ENCODE measurements at regions of chr6 and their contacts with region 1.

Region 1: DNA sequence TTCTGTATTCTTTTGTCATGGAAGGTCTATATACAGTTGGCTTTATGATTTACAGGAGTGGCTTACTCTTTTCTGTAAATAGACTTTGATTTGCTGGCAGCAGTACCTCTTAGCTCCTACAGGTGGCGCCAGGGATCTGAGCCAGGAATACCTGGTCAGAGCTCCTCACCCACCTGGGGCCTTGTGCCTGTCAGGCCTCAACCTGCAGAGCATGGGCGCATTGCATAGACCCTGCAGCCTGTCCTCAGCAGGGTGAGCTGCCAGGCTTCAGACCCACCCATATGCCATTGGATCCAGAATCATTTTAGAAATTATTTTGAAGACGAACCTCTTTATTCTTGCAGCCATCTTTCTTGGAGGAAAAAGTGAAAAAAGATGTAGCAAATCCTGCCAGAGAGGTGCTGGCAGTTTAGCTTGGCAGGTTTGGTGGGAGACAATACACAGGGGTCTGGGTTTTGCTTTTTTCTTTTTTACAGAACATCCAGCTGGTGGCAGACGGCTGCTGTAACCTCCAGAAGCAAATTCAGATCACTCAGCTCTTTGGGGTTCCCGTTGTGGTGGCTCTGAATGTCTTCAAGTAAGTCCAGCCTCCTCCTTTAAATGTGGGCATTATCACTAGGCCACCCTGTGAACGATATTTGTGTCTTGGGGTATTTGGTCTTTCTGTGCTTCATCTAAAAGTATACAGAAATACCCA is 149.1 kb downstream of the MTHFD1L start:
- DNase-seq: peak; percentile 57 to 74 (median 63)
- H3K4me3 ChIP-seq: no peak overlapping the region
- H3K27ac ChIP-seq: no peak overlapping the region
- H3K4me1 ChIP-seq: no peaks in the 10 kb centered on the region
- H3K27me3 ChIP-seq: no peaks in the 10 kb centered on the region

Region 2: GRCh38 chr6:151004415-151005024 is 10.0 kb before region 1 on chr6:
- CTCF ChIA-PET with region 1: interaction called, 19 read pairs
- POLR2A ChIA-PET with region 1: no interaction called
- DNase-seq: peak; percentile 57 to 84 (median 71)
- H3K4me3 ChIP-seq: peak overlapping the region in 2 of 7 experiments; percentile 42 to 43
- H3K27ac ChIP-seq: peak overlapping the region in 1 of 2 experiments; percentile 19
- H3K4me1 ChIP-seq: peaks cover 6 to 22% (median 15%) of the 10 kb centered on the region in 4 experiments
- H3K27me3 ChIP-seq: no peaks in the 10 kb centered on the region

Region 3: GRCh38 chr6:151038616-151039015 is 24.1 kb after region 1 on chr6:
- CTCF ChIA-PET with region 1: interaction called, 12 read pairs
- POLR2A ChIA-PET with region 1: no interaction called
- DNase-seq: no peak
- H3K4me3 ChIP-seq: no peak overlapping the region
- H3K27ac ChIP-seq: no peak overlapping the region
- H3K4me1 ChIP-seq: peaks cover 0 to 19% (median 11%) of the 10 kb centered on the region in 4 experiments
- H3K27me3 ChIP-seq: no peaks in the 10 kb centered on the region

Region 4: GRCh38 chr6:151063352-151063751 is 48.8 kb after region 1 on chr6:
- CTCF ChIA-PET with region 1: no interaction called
- POLR2A ChIA-PET with region 1: no interaction called
- DNase-seq: no peak
- H3K4me3 ChIP-seq: no peak overlapping the region
- H3K27ac ChIP-seq: no peak overlapping the region
- H3K4me1 ChIP-seq: peaks cover 0 to 11% (median 9%) of the 10 kb centered on the region in 4 experiments
- H3K27me3 ChIP-seq: no peaks in the 10 kb centered on the region

Region 5: GRCh38 chr6:151317103-151317994 is 302.8 kb after region 1 on chr6:
- CTCF ChIA-PET with region 1: interaction called, 109 read pairs
- POLR2A ChIA-PET with region 1: no interaction called
- DNase-seq: no peak
- H3K4me3 ChIP-seq: no peak overlapping the region
- H3K27ac ChIP-seq: no peak overlapping the region
- H3K4me1 ChIP-seq: no peaks in the 10 kb centered on the region
- H3K27me3 ChIP-seq: peaks cover 0 to 3% (median 0%) of the 10 kb centered on the region in 5 experiments

Region 6: DNA sequence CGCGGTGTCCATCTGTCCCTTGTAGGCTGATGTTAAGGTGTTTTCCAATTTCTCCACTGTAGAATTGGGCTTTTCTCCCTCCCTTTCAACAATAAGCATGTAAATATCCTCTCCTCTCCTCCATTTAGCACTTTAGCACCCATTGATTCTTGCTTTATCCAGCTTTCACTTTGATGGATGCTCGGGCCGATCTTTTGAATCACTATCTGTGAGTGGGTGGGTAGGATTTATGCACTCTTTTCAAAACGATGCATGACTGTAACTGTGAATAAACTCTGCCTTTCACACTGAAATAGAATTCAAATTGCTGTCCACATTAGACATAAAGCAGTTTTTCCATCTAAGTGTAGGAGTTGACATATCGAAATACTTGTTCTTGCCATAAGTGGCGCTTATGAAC is 324.3 kb after region 1 on chr6:
- CTCF ChIA-PET with region 1: interaction called, 37 read pairs
- POLR2A ChIA-PET with region 1: no interaction called
- DNase-seq: no peak
- H3K4me3 ChIP-seq: no peak overlapping the region
- H3K27ac ChIP-seq: no peak overlapping the region
- H3K4me1 ChIP-seq: no peaks in the 10 kb centered on the region
- H3K27me3 ChIP-seq: peaks cover 0 to 4% (median 0%) of the 10 kb centered on the region in 5 experiments